ENCODE measurements at regions of chr17 and their contacts with region 1.

Region 1: GRCh38 chr17:79393358-79394202 is 217.3 kb downstream of the RBFOX3 start:
- DNase-seq: peak; percentile 73 to 92 (median 87)
- H3K4me3 ChIP-seq: no peak overlapping the region
- H3K27ac ChIP-seq: peak overlapping the region in 1 of 59 donors; percentile 49
- H3K27me3 ChIP-seq: peaks cover 0 to 62% (median 15%) of the 10 kb centered on the region in 45 donors
- CTCF ChIP-seq: peak; percentile 71 to 99 (median 92)

Region 2: DNA sequence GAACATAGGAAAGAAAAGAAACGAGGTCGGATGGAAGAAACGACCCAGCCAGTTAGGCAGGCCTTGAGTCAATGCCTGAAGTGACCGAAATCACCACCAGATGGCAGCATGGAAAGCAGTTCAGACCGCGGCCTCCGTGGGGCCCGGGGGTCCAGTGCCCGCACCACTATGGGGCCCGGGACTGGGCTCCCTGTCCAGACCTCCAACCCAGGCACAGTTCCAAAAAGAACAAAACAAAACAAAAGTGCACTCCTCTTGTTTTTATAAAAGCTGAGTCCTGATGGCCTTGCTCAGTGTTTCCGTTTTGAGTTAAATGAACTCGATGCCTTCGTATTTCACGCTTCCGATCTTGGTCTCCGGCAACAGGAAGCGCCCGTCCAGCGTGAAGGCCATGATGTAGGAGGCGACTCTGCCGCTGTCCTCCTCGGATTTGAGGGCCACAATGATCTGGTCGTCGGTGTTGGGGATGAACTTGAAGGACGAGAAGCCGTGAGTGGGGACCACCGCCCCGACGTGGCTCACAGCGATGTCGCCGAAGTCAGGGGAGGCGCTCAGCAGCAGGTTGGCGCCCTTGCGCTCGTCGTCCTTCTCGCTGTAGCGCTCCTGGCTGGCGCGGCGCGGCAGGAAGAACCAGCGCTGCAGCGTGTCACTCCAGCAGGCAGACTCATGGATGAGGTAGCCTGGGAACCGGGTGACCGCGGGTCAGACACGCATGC is 400.2 kb before region 1 on chr17:
- intact Hi-C with region 1: loop called in 1 of 2 experiments (anchors 10 kb)
- DNase-seq: peak in 8 of 10 donors; percentile 42 to 70 (median 62)
- H3K4me3 ChIP-seq: no peak overlapping the region
- H3K27ac ChIP-seq: peak overlapping the region in 15 of 59 donors; percentile 6 to 68 (median 21)
- H3K27me3 ChIP-seq: no peaks in the 10 kb centered on the region
- CTCF ChIP-seq: peak; percentile 61 to 92 (median 82)

Region 3: GRCh38 chr17:79087428-79088143 is 306.0 kb before region 1 on chr17:
- intact Hi-C with region 1: loop called (anchors 2 to 5 kb)
- DNase-seq: peak; percentile 68 to 91 (median 80)
- H3K4me3 ChIP-seq: peak overlapping the region in 1 of 59 donors; percentile 3
- H3K27ac ChIP-seq: peak overlapping the region in 13 of 59 donors; percentile 14 to 72 (median 40)
- H3K27me3 ChIP-seq: peaks cover 0 to 7% (median 0%) of the 10 kb centered on the region in 45 donors
- CTCF ChIP-seq: peak; percentile 63 to 97 (median 92)

Region 4: DNA sequence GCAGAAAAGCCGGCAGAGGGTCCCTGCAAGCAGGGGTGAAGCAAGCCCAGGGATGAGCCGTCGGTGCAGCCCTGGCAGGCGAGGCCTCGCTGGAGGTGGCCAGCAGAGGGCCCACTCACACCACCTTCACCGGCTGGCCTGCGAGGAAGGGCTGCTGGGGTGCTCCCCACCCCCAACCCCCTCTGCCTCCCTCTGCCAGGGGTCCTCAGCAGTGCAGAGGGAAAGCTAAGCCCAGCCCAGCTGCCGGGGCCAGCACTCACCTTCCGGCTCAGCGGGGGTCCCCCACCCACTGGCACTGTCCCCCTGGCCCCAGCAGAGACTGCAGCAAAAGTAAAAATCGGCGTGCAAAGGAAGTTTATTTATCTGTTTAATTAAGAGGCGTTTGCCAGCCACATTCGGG is 205.5 kb before region 1 on chr17:
- intact Hi-C with region 1: loop called (anchors 5 to 10 kb)
- DNase-seq: peak in 6 of 10 donors; percentile 44 to 73 (median 58)
- H3K4me3 ChIP-seq: no peak overlapping the region
- H3K27ac ChIP-seq: peak overlapping the region in 1 of 59 donors; percentile 17
- H3K27me3 ChIP-seq: peaks cover 0 to 89% (median 40%) of the 10 kb centered on the region in 45 donors
- CTCF ChIP-seq: peak in 53 of 56 donors; percentile 22 to 67 (median 51)

Region 5: GRCh38 chr17:79707931-79708891 is 314.6 kb after region 1 on chr17:
- intact Hi-C with region 1: loop called (anchors 5 to 10 kb)
- DNase-seq: peak in 8 of 10 donors; percentile 53 to 77 (median 64)
- H3K4me3 ChIP-seq: peak overlapping the region in 48 of 59 donors; percentile 5 to 61 (median 41)
- H3K27ac ChIP-seq: peak overlapping the region in 1 of 59 donors; percentile 53
- H3K27me3 ChIP-seq: peaks cover 0 to 7% (median 0%) of the 10 kb centered on the region in 45 donors
- CTCF ChIP-seq: peak; percentile 64 to 89 (median 81)

Measured in dorsolateral prefrontal cortex (tissue), 120 donors.